AG04450 (cell line): ENCODE measurements at regions of chr1 and their contacts with region 1.

Region 1: DNA sequence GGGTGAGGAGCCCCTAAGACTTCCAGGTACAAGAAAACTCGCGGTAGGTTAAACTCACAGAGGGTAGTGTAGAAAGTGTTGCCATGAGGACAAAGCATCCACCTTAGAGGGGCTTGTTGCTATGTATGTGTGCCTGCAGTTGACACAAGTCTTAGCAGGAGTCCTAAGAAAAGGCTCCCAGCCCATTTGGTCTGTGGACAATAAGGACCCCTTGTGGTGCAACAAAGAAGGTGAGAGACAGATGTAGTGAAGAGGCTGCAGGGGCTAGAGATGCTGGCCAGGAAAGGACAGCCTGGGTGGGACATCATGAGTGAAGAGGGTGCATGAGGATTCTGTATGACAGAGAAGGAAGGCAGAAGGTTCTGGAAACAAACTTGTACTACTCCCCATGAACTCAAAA is 36.3 kb upstream of the IL10 start:
- DNase-seq: no peak
- H3K4me3 ChIP-seq: no peak overlapping the region
- H3K27ac ChIP-seq: no peak overlapping the region
- H3K27me3 ChIP-seq: no peaks in the 10 kb centered on the region
- CTCF ChIP-seq: peak; percentile 66

Region 2: DNA sequence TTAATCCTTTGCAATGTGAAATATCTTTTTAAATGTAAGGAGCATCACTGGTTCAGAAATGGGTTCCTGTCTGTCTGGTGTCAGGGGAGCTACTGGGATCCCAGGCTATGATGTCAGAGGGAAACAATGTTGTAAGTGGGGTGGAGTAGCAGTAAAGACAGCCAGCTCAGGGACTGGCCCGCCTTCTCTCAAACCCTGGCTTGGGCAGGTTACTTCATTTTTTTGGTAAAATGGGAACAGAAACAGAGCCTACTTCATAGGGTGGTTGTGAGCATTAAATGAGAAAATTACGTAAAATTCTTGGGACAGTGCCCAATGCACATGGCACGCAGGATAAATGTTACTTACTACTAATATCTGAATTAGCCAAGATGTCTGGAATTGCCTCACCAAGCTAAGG is 26.1 kb after region 1 on chr1:
- CTCF ChIA-PET with region 1: interaction called, 17 read pairs
- POLR2A ChIA-PET with region 1: no interaction called
- DNase-seq: no peak
- H3K4me3 ChIP-seq: no peak overlapping the region
- H3K27ac ChIP-seq: no peak overlapping the region
- H3K27me3 ChIP-seq: no peaks in the 10 kb centered on the region
- CTCF ChIP-seq: no peak